Heart right ventricle (tissue), 16 donors: ENCODE measurements at regions of chr11 and their contacts with region 1.

Region 1: DNA sequence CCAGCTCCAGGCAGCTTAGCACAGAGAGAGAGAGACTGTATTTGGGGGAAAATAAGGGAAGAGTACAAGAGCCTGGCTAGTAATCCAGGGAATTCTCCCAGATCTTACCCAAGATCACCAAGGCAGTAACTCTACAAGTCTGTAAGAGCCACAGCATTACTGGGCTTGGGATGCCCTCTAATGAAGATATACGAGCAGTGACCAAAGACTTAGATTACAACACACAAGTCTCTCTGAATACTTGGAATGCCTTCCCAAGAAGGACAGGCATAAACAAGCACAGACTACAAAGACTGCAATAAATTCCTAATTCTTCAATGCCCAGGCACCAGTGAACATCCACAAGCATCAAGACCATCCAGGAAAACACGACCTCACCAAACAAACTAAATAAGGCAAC is 17.7 kb downstream of the DNAJC24 start:
- DNase-seq: no peak
- ATAC-seq: no peak
- H3K4me3 ChIP-seq: no peak overlapping the region
- H3K27ac ChIP-seq: no peak overlapping the region
- H3K4me1 ChIP-seq: no peaks in the 10 kb centered on the region
- H3K27me3 ChIP-seq: no peaks in the 10 kb centered on the region
- CTCF ChIP-seq: no peak

Region 2: GRCh38 chr11:30091728-30092127 is 1295.7 kb before region 1 on chr11:
- intact Hi-C with region 1: no loop called
- DNase-seq: no peak
- ATAC-seq: no peak
- H3K4me3 ChIP-seq: no peak overlapping the region
- H3K27ac ChIP-seq: no peak overlapping the region
- H3K4me1 ChIP-seq: no peaks in the 10 kb centered on the region
- H3K27me3 ChIP-seq: no peaks in the 10 kb centered on the region
- CTCF ChIP-seq: no peak

Region 3: DNA sequence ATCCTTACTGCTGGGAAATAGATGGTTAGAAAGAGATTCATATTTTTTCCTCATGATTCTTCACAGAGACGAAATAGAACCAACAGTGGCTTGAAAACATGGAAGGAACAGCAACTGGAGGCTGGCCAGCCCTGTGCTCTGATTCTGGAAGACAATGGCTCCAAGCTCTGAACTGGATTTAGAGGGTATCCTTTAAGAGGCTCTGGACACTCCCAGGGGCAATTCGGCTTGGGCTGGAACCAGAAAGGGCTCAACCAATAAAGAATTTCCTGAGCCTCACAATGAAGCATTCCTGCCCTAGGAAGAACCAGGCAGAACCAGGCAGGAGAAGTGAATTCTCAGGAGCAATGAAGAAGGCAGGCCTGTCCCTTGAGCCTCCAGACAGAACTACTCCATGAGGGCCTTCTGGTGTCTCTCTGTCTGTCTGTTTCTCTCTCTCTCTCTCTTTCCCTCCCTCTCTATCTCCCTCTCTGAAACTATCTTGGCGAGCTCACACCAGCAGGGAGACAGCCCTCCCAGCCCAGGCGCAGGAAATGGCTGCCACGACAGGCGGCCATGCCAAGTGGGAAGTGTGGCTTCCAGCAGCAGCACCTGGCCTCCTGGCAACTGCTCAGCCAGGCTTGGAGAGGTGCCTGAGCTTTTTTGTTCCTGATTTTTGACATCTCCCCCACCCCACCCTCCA is 796.8 kb after region 1 on chr11:
- intact Hi-C with region 1: loop called in 6 of 10 experiments (anchors 10 kb)
- DNase-seq: peak in 1 of 2 donors; percentile 26
- ATAC-seq: peak in 1 of 8 donors; percentile 37
- H3K4me3 ChIP-seq: no peak overlapping the region
- H3K27ac ChIP-seq: peak overlapping the region in 1 of 10 donors; percentile 25
- H3K4me1 ChIP-seq: peaks cover 0 to 8% (median 4%) of the 10 kb centered on the region in 9 donors
- H3K27me3 ChIP-seq: peaks cover 0 to 11% (median 0%) of the 10 kb centered on the region in 7 donors
- CTCF ChIP-seq: no peak